ENCODE measurements at regions of chr2 and their contacts with region 1.

Region 1: DNA sequence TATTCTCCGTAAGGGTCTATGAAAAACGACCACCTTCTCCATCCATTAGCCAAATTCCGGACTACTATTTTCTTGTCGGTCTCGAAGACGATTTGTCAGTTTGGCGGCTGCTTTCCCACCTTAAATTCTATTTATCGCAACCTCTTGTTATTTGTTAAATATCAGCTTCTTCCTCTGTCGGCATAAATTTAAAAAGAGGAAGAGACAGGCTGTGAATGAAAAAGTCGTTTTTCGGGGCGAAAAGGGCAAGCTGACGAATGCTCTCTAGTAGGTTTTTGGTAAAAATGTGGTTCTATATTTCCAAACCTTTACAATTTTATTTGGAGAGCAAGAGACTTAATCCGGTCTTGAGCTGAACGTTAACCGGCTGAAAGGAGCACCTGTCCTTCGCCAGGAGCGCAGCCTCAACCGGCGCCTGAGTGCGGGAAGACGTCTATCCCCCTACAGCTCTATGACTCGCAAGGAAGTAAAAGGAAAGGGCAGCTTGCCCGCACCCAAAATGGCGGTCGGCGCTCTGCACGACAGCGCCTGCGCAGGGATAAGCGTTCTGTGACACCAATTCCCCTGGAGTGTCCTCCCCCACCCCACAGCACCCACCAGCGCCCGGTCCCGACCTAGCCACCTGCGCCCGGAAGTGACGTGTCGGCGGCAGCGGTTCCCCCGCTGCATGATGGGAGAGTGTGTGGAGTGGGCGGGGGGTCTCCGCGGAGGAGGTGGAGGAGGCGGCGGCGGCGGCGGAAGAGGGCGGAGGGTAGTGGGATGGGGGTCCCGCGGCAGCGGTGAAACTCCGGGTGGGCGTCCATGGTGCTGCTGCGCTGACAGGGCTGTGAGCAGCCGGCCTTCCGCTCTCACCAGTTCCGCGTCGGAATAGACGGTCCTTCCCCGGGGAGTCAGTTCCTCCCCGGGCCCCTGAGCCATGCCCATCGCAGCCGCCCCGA is at the start of gene AFTPH:
- DNase-seq: peak; percentile 97
- ATAC-seq: peak; percentile 87
- H3K4me3 Mint-ChIP-seq: peak within 1 kb of the TSS; percentile 99
- H3K27ac Mint-ChIP-seq: peak within 1 kb of the TSS; percentile 100
- H3K4me1 Mint-ChIP-seq: peaks cover 46% of the 10 kb centered on the region
- H3K27me3 Mint-ChIP-seq: no peaks in the 10 kb centered on the region
- CTCF ChIP-seq: no peak
- total RNA-seq, gene AFTPH: 76.2 and 81.3 TPM in 2 replicates

Region 2: DNA sequence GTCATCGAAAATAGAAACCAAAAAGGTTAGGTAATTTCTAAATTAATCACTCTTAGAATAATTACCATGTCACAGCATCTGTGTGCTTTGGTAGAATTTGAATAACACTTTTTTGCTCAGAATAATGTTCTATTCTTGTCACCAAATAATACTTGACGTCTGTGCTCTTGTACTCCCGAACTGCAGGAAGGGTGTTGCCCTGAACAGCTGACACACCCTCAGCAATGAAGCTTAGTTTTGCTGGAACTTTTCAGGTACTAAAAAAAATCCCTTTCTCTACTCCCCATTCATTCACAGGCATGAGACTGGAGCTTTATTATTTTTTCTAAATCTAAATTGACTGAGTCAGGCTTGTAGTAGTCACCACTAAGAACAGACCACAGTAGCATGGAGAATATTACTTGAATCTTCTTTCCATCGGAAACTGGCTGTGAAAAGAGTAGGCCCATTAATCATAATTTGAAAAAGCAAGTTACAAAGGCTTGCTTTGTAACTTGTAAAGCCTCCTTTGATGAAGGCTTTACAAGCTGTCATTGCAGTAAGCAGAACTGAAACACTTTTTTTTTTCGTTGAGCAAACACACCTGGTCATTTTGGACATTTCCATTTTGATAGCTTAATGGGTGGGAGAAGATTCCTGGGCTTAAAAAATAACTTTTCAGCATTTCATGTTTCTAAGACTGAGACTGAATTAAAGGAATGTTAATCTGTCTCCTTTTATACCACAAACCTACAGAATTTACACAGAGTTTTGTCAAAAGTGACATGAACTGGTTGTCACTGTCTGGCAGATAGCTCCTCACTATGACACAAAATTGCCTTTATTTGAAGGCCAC is 309.4 kb before region 1 on chr2:
- CTCF ChIA-PET with region 1: no interaction called
- POLR2A ChIA-PET with region 1: interaction called, 4 read pairs
- intact Hi-C with region 1: loop called (anchors 5 kb)
- DNase-seq: no peak
- ATAC-seq: peak; percentile 64
- H3K4me3 Mint-ChIP-seq: peak overlapping the region; percentile 75
- H3K27ac Mint-ChIP-seq: peak overlapping the region; percentile 99
- H3K4me1 Mint-ChIP-seq: peaks cover 76% of the 10 kb centered on the region
- H3K27me3 Mint-ChIP-seq: no peaks in the 10 kb centered on the region
- CTCF ChIP-seq: no peak

Region 3: DNA sequence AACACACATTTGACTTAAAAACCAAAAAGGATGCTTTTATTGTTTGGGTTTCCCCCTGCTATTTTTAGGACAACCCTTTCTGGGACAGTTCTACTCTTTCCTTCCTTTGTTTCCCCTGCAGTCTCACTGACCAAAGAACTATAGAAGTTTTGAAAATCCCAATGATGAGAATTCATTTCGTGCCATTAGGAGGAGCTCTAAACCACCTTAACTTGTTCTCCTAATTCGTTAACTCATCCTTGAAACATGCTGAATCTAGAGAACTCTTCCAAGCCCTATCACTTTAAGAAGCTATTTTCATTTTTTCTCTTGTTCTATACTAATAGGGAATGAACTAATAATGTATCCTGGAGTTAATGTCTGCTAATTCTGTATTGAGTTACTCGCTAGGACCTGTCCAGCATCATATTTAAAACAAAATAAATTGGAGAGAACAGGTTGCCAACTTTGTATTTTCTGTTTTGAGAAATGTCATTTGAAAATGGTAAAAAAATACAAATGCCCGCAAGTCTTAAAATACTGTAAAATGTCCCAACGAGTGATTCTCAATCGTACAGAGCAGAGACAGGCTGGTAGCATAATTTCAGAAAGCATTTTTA is 63.0 kb after region 1 on chr2:
- CTCF ChIA-PET with region 1: interaction called, 21 read pairs
- POLR2A ChIA-PET with region 1: interaction called, 12 read pairs
- intact Hi-C with region 1: no loop called
- DNase-seq: no peak
- ATAC-seq: peak; percentile 62
- H3K4me3 Mint-ChIP-seq: no peak overlapping the region
- H3K27ac Mint-ChIP-seq: peak overlapping the region; percentile 50
- H3K4me1 Mint-ChIP-seq: peaks cover 17% of the 10 kb centered on the region
- H3K27me3 Mint-ChIP-seq: no peaks in the 10 kb centered on the region
- CTCF ChIP-seq: peak; percentile 77

Region 4: GRCh38 chr2:64750817-64751285 is 226.9 kb after region 1 on chr2:
- CTCF ChIA-PET with region 1: interaction called, 3 read pairs
- POLR2A ChIA-PET with region 1: interaction called, 19 read pairs
- intact Hi-C with region 1: loop called (anchors 1 kb)
- DNase-seq: peak; percentile 92
- ATAC-seq: peak; percentile 82
- H3K4me3 Mint-ChIP-seq: peak overlapping the region; percentile 98
- H3K27ac Mint-ChIP-seq: peak overlapping the region; percentile 98
- H3K4me1 Mint-ChIP-seq: peaks cover 26% of the 10 kb centered on the region
- H3K27me3 Mint-ChIP-seq: no peaks in the 10 kb centered on the region
- CTCF ChIP-seq: no peak

Region 5: DNA sequence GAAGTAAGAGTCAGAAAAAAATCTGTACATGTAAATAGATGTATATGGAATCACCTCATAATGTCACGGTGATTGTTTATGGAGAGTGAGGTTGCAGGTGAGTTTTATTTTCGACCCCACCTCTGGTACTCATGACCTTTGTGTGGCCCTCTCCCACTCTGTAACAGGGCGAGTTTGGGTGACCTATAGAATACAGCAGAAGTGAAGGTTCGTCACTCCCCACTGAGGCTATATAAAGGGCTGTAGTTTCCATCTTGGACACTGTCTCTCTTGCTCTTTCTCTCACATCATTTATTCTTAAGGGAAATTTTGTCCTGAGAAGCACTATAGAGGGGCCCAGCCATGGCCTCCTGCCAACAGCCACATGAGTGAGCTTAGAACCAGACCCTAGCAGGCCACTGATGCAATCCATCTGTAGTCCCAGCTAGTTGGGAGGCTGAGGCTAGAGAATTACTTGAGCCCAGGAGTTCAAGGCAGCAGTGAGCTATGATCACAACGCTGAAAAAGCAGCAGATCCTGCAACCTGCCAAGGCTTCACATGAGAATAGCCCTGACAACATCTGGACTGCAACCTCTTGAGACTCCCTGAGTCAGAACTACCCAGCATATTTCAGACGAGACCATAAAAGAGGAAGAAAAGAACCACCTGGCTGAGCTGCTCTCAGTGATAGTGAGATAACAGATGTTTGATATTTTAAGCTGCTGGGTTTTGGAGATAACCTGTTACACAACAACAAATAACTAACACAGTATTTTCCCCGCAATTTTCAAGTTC is 391.0 kb after region 1 on chr2:
- CTCF ChIA-PET with region 1: interaction called, 5 read pairs
- POLR2A ChIA-PET with region 1: interaction called, 25 read pairs
- intact Hi-C with region 1: loop called (anchors 1 kb)
- DNase-seq: no peak
- ATAC-seq: peak; percentile 73
- H3K4me3 Mint-ChIP-seq: peak overlapping the region; percentile 71
- H3K27ac Mint-ChIP-seq: peak overlapping the region; percentile 94
- H3K4me1 Mint-ChIP-seq: peaks cover 68% of the 10 kb centered on the region
- H3K27me3 Mint-ChIP-seq: no peaks in the 10 kb centered on the region
- CTCF ChIP-seq: no peak

Region 6: GRCh38 chr2:65227425-65228262 is 703.7 kb after region 1 on chr2 and contains the start of gene ACTR2:
- CTCF ChIA-PET with region 1: no interaction called
- POLR2A ChIA-PET with region 1: interaction called, 11 read pairs
- intact Hi-C with region 1: loop called (anchors 1 kb)
- DNase-seq: peak; percentile 88
- ATAC-seq: peak; percentile 90
- H3K4me3 Mint-ChIP-seq: peak within 1 kb of the TSS; percentile 99
- H3K27ac Mint-ChIP-seq: peak within 1 kb of the TSS; percentile 100
- H3K4me1 Mint-ChIP-seq: peaks cover 45% of the 10 kb centered on the region
- H3K27me3 Mint-ChIP-seq: no peaks in the 10 kb centered on the region
- CTCF ChIP-seq: no peak
- total RNA-seq, gene ACTR2: 484 and 493 TPM in 2 replicates